Dendritic cell treated with granulocyte-macrophage colony-stimulating factor and Interleukin-4, amounts not matched to agents 40 ng/mL and 50 ng/mL, for 4 days (primary cell): ENCODE measurements at regions of chr7 and their contacts with region 1.

Region 1: DNA sequence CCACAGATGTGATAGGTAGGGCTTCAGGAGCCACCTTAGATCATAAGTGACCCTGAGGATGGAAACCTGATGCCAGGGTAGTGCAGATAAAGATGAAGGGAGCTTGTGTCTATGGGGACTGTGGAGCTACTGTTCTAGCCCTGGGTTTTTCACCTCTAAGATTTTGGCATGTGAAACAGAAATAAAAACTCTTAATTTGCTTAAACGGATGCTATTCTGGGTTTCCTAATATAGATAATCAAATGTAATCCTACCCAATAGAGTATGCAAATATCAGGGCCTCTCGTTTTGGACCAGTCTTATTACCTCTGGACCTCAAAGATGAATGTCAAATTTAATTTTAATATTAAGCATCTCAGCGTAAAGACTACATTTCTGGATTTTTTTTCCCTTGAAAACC is 49.3 kb downstream of the ABCB4 start:
- H3K4me3 Mint-ChIP-seq: no peak overlapping the region
- H3K27ac Mint-ChIP-seq: no peak overlapping the region
- H3K4me1 Mint-ChIP-seq: peaks cover 25% of the 10 kb centered on the region
- H3K27me3 Mint-ChIP-seq: no peaks in the 10 kb centered on the region

Region 2: DNA sequence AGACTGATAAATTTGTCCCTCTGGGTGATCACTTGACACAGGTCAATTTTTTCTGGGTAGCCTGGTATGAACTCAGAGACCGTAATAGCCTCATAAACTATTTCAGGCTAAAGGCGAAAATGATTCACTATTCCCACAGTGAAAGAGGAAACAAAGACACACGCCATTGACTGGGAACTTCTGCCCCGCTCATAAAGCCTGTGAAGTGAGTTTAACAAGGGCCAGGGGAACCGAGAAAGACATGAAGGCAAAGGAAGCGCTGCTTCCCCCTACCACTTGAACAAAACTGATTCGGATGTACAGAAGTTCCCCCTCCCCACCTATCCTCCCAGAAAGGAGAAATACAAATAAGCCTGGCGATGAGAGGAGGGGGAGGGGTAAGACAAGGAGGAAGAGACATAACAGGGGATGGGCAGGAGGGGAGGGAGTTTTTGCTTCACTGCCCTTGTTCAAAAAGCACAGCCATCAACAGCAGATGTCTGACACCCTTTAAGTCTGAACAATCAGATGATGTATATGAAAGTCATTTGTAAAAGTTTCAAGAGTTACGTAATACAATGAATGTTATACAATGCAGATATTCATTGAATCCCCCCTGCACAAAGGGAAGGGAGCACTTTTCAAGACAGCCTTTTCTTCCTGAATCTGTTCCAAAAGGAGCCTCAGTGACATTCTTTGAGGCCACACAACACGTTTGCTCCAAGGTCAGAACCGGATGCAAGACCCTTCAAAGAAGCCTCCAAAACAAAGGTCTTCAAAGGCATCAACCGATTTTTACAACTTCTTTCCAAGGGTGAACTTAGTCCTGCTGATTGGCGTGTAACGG is 48.6 kb after region 1 on chr7:
- intact Hi-C with region 1: loop called (anchors 5 kb)
- H3K4me3 Mint-ChIP-seq: peak overlapping the region; percentile 66
- H3K27ac Mint-ChIP-seq: peak overlapping the region; percentile 69
- H3K4me1 Mint-ChIP-seq: peaks cover 25% of the 10 kb centered on the region
- H3K27me3 Mint-ChIP-seq: peaks cover 15% of the 10 kb centered on the region